MCF 10A (cell line): ENCODE measurements at regions of chr6 and their contacts with region 1.

Region 1: DNA sequence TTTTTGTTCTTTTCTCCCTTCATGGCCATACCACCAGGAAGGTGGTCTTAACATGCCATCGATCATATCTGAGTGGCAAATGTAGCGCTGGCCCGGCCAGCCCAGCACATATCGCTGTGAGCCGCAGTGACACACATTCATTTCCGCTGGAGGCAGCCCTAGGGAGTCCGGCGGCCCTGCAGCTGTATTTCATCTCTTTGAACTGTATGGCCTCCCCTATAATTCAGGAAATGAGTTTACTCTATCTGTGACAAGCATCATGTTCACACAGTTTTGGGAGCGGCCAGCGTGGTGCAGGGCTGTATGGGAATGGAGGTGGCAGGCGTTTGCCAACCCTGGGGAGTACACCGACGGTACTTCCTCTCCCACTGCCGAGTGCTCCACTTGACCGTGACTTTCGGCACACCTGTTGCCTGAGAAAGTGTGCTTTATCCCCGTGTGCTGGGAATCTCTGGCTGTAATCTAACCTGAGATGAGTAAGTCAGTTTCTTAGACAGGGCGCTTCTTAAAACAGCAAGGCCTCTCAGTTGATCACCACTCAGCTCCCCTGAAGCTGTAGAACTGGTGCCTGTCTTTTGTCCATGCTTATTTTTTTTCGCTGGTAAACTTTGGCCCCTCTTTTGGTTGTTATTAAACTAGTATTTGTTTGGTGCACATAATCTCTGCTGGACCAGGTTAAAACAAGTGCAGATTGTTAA is 257.1 kb upstream of the TAB2 start:
- DNase-seq: no peak
- H3K4me3 Mint-ChIP-seq: no peak overlapping the region
- H3K27ac Mint-ChIP-seq: peak overlapping the region; percentile 63
- H3K4me1 Mint-ChIP-seq: peaks cover 10% of the 10 kb centered on the region
- H3K27me3 Mint-ChIP-seq: no peaks in the 10 kb centered on the region
- CTCF ChIP-seq: no peak

Region 2: GRCh38 chr6:149049230-149049629 is 11.2 kb before region 1 on chr6:
- CTCF ChIA-PET with region 1: no interaction called
- POLR2A ChIA-PET with region 1: interaction called, 17 read pairs
- intact Hi-C with region 1: no loop called
- DNase-seq: peak; percentile 4
- H3K4me3 Mint-ChIP-seq: no peak overlapping the region
- H3K27ac Mint-ChIP-seq: peak overlapping the region; percentile 84
- H3K4me1 Mint-ChIP-seq: peaks cover 11% of the 10 kb centered on the region
- H3K27me3 Mint-ChIP-seq: no peaks in the 10 kb centered on the region
- CTCF ChIP-seq: no peak

Region 3: DNA sequence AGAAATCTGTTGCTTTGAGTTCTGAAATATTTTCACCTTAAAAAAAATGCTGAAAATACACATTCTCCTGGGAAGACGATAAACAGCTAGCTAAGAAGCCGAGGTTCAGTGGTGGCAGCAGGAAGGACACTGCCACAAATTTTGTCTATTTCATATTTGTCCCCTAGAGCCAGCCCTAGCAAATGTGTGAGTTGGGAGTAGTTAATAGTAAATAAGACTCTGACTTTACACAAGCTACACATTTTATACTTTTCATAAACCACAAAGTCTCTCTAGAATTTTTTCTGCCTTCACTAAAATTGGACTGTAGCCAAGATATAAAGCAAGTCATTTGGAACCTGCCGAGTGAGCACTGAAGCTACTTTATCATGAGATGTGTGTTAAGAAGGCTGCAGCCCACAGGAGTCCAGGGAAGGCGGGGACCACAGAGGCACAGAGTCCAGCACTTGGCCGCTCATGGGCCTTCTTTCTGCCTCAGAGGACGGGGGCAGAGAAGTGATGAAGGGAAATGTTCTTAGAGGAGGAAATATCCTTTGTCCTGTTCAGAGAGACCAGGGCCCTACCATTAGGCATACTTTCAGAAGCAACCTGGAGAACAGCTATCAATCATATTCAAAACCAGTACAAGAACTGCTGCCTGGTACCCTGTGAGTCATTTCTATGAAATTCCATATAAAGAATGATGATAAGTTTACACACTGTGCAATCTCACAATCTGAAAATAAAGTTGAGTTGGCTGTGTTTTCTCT is 15.3 kb after region 1 on chr6:
- CTCF ChIA-PET with region 1: interaction called, 7 read pairs
- POLR2A ChIA-PET with region 1: interaction called, 78 read pairs
- intact Hi-C with region 1: no loop called
- DNase-seq: peak; percentile 39
- H3K4me3 Mint-ChIP-seq: peak overlapping the region; percentile 10
- H3K27ac Mint-ChIP-seq: peak overlapping the region; percentile 70
- H3K4me1 Mint-ChIP-seq: peaks cover 22% of the 10 kb centered on the region
- H3K27me3 Mint-ChIP-seq: no peaks in the 10 kb centered on the region
- CTCF ChIP-seq: no peak

Region 4: DNA sequence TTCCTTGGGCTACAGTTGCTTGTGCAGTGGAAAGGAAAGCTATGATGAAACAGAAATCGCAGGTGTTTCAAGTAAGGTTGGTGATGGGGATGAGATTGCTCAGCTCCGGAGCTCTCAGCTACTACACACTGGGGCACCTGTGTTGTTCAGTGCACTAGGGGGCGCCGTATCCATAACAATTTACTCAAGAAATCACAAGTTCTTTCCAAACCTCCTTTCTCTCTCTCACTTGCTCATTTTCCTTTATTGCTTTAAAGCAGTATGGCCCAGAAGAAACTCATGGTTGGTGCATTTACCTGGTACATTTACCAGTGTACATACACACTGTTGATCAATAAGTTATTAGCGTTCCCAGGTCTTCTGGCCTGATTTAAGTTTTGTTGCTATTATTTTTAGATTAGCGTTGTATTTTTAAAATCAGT is 21.8 kb after region 1 on chr6:
- CTCF ChIA-PET with region 1: interaction called, 4 read pairs
- POLR2A ChIA-PET with region 1: interaction called, 78 read pairs
- intact Hi-C with region 1: no loop called
- DNase-seq: peak; percentile 78
- H3K4me3 Mint-ChIP-seq: no peak overlapping the region
- H3K27ac Mint-ChIP-seq: no peak overlapping the region
- H3K4me1 Mint-ChIP-seq: peaks cover 11% of the 10 kb centered on the region
- H3K27me3 Mint-ChIP-seq: no peaks in the 10 kb centered on the region
- CTCF ChIP-seq: peak; percentile 72